Left colon (tissue), 2 donors: ENCODE measurements at regions of chr6 and their contacts with region 1.

Region 1: GRCh38 chr6:43454696-43455530 is 435 bp downstream of the DLK2 start:
- DNase-seq: peak; percentile 72 to 88
- ATAC-seq: peak; percentile 89

Region 2: GRCh38 chr6:43496370-43497128 is 41.6 kb after region 1 on chr6:
- intact Hi-C with region 1: loop called (anchors 5 to 10 kb)
- DNase-seq: no peak
- ATAC-seq: peak; percentile 23

Region 3: GRCh38 chr6:43506667-43507471 is 52.0 kb after region 1 on chr6:
- intact Hi-C with region 1: loop called in 1 of 2 experiments (anchors 10 kb)
- DNase-seq: peak; percentile 62 to 81
- ATAC-seq: peak; percentile 34

Region 4: DNA sequence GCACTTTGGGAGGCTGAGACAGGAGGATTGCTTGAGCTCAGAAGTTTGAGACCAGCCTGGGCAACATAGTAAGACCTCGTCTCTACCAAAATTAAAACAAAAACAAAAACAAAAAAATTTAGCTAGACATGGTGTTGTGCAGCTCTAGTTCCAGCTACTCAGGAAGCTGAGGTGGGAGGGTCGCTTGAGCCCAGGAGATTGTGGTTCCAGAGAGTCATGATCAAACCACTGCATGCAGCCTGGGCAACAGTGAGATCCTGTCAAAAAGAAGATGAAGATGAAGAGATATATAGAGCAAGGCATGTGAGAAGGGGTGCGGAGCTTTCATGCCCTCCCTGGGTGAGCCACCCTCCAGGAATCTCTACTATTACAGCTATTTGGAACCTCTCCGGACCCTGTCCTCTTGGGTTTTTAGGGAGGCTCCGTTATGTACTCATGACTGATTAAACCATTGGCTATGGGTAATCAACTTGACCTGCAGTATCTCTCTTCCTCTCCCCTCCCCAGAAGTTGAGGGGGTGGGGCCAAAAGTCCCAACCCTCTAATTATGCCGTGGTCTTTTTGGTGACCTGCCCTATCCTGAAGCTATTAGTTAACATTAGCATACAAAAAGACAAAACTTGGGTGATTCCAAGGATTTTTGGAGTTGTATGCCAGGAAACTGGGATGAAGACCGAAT is 130.1 kb after region 1 on chr6:
- intact Hi-C with region 1: no loop called
- DNase-seq: no peak
- ATAC-seq: no peak